Tibial artery (tissue), 4 donors: ENCODE measurements at regions of chr1 and their contacts with region 1.

Region 1: GRCh38 chr1:154263465-154264332 is 8.7 kb upstream of the HAX1 start:
- DNase-seq: no peak
- H3K4me3 ChIP-seq: no peak overlapping the region
- H3K27ac ChIP-seq: no peak overlapping the region
- H3K4me1 ChIP-seq: no peaks in the 10 kb centered on the region
- H3K27me3 ChIP-seq: no peaks in the 10 kb centered on the region
- CTCF ChIP-seq: no peak

Region 2: GRCh38 chr1:153805042-153805745 is 458.5 kb before region 1 on chr1:
- intact Hi-C with region 1: loop called (anchors 10 kb)
- DNase-seq: peak; percentile 64 to 75
- H3K4me3 ChIP-seq: no peak overlapping the region
- H3K27ac ChIP-seq: no peak overlapping the region
- H3K4me1 ChIP-seq: no peaks in the 10 kb centered on the region
- H3K27me3 ChIP-seq: no peaks in the 10 kb centered on the region
- CTCF ChIP-seq: no peak